ENCODE measurements at regions of chr1 and their contacts with region 1.

Region 1: GRCh38 chr1:206635080-206635977 is at the start of gene DYRK3:
- DNase-seq: peak; percentile 87 to 93
- ATAC-seq: peak; percentile 91 to 95
- H3K4me3 ChIP-seq: peak within 1 kb of the TSS; percentile 91
- H3K27ac ChIP-seq: peak within 1 kb of the TSS; percentile 88 to 89
- H3K4me1 ChIP-seq: peaks cover 32% of the 10 kb centered on the region; the same call in 2 of the 3 replicates
- CTCF ChIP-seq: no peak
- EP300 ChIP-seq: no peak
- POLR2A ChIP-seq: peak; percentile 91
- RAD21 ChIP-seq: no peak; a peak in 1 of 5 replicates
- polyA plus RNA-seq, gene DYRK3: 7.3 and 9.3 TPM in 2 replicates

Region 2: GRCh38 chr1:206513312-206514111 is 121.8 kb before region 1 on chr1:
- CTCF ChIA-PET with region 1: no interaction called
- POLR2A ChIA-PET with region 1: no interaction called
- DNase-seq: no peak
- ATAC-seq: peak; percentile 42 to 60; a peak in 4 of 6 replicates
- H3K4me3 ChIP-seq: no peak overlapping the region
- H3K27ac ChIP-seq: peak overlapping the region; percentile 39 to 55; a peak in 3 of 6 replicates
- H3K4me1 ChIP-seq: peaks cover 16% of the 10 kb centered on the region
- CTCF ChIP-seq: no peak
- EP300 ChIP-seq: no peak
- POLR2A ChIP-seq: no peak
- RAD21 ChIP-seq: no peak

Region 3: DNA sequence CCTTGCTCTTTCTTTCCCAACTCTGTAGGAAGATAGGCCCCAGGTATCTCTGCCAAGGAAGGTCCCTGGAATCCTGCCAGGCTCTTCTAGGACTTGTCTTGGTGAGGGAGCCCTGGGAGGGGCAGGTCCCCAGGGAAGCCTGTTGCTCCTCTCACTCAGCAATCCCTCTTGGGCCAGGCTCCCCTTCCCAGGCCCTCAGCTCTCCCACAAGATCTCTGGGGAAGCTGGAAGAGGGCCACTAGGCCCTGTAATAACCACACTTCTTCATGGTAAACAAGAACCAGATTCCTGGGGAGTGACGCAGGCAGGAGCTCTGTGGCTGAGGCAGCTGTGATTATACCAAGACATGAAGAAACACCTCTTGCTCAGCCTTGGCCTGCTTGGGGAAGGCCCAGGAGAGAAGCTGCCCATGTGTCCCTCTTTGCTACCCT is 39.4 kb after region 1 on chr1:
- CTCF ChIA-PET with region 1: interaction called, 452 read pairs
- POLR2A ChIA-PET with region 1: interaction called, 6 read pairs
- DNase-seq: peak; percentile 46 to 85
- ATAC-seq: peak; percentile 96
- H3K4me3 ChIP-seq: no peak overlapping the region
- H3K27ac ChIP-seq: peak overlapping the region; percentile 64 to 84
- H3K4me1 ChIP-seq: peaks cover 29% of the 10 kb centered on the region
- CTCF ChIP-seq: no peak
- EP300 ChIP-seq: no peak
- POLR2A ChIP-seq: no peak
- RAD21 ChIP-seq: no peak

Region 4: GRCh38 chr1:206684478-206685333 is 49.4 kb after region 1 on chr1 and contains the start of gene MAPKAPK2:
- CTCF ChIA-PET with region 1: interaction called, 8 read pairs
- POLR2A ChIA-PET with region 1: interaction called, 10 read pairs
- DNase-seq: peak; percentile 72 to 91
- ATAC-seq: peak; percentile 72 to 84
- H3K4me3 ChIP-seq: peak within 1 kb of the TSS; percentile 91
- H3K27ac ChIP-seq: peak within 1 kb of the TSS; percentile 97 to 99
- H3K4me1 ChIP-seq: peaks cover 36% of the 10 kb centered on the region
- CTCF ChIP-seq: no peak
- EP300 ChIP-seq: no peak
- POLR2A ChIP-seq: peak; percentile 42
- RAD21 ChIP-seq: no peak
- polyA plus RNA-seq, gene MAPKAPK2: 37.2 and 48.5 TPM in 2 replicates